ENCODE measurements at regions of chr6 and their contacts with region 1.

Region 1: DNA sequence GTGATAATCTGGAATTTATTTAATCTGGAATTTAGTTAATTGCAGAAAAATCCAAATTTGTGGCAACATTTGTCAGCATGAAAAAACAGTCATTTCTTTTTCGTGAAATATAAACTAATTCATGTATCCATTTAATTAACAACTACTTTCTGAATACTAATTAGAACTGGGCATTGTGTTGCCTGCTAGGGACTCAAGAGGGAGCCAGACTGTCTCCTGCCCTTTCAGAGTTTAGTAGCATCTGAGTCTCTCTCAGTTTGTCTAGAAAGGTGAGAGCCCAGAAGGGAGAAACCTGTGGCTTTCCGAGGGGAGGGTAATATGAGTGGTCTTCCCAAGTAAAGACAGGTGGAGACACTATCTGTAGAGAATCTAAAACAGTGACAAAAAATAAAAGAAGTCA is 210.9 kb upstream of the HDDC2 start:
- DNase-seq: no peak
- H3K4me3 Mint-ChIP-seq: no peak overlapping the region
- H3K27ac Mint-ChIP-seq: no peak overlapping the region
- H3K4me1 Mint-ChIP-seq: peaks cover 11% of the 10 kb centered on the region
- H3K27me3 Mint-ChIP-seq: peaks cover 1% of the 10 kb centered on the region
- CTCF ChIP-seq: peak; percentile 13

Region 2: GRCh38 chr6:125558907-125559306 is 46.3 kb after region 1 on chr6:
- CTCF ChIA-PET with region 1: no interaction called
- intact Hi-C with region 1: no loop called
- DNase-seq: no peak
- H3K4me3 Mint-ChIP-seq: no peak overlapping the region
- H3K27ac Mint-ChIP-seq: no peak overlapping the region
- H3K4me1 Mint-ChIP-seq: no peaks in the 10 kb centered on the region
- H3K27me3 Mint-ChIP-seq: no peaks in the 10 kb centered on the region
- CTCF ChIP-seq: no peak

Region 3: DNA sequence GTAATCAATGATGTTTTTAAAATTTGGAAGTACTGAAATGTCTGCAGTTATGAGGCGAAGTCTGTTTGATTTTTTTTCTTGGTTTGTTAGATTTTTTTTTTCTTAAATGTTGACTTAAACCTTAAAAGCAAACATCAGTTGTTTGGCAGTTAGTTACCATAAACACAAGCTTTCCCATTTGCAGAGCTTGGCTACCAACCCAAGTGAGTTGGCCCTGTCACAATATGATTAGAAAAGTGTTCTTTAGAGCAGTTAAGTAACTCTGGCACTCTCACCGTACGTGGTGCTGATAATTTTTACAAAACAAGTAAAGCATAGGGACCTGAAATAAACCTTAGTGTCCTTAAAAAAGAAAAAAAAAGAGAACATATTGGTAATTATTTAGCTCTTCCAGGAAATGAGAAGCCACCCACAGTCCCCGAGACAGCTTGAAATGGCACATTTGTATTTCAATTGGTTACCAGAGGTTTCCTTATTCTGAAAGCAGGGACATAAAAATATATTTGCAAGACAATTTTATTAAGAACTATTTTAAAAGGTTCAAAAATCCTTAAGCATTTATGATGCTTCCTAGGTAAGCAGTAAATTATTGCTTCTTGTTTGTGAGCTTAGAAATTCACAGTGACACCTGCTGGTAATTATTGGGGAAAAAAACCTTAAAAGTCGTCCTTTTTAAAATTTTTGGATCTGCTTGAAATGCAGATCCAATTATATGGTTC is 240.8 kb after region 1 on chr6:
- CTCF ChIA-PET with region 1: no interaction called
- intact Hi-C with region 1: loop called (anchors 10 kb)
- DNase-seq: no peak
- H3K4me3 Mint-ChIP-seq: no peak overlapping the region
- H3K27ac Mint-ChIP-seq: no peak overlapping the region
- H3K4me1 Mint-ChIP-seq: peaks cover 17% of the 10 kb centered on the region
- H3K27me3 Mint-ChIP-seq: peaks cover 31% of the 10 kb centered on the region
- CTCF ChIP-seq: no peak

Measured in Calu3 (cell line).